Brain microvascular endothelial cell (primary cell): ENCODE measurements at regions of chr15 and their contacts with region 1.

Region 1: GRCh38 chr15:51380999-51381795 is 39.7 kb downstream of the GLDN start:
- DNase-seq: peak; percentile 65
- H3K4me3 ChIP-seq: no peak overlapping the region
- H3K27ac ChIP-seq: no peak overlapping the region
- H3K27me3 ChIP-seq: no peaks in the 10 kb centered on the region
- CTCF ChIP-seq: peak; percentile 94

Region 2: DNA sequence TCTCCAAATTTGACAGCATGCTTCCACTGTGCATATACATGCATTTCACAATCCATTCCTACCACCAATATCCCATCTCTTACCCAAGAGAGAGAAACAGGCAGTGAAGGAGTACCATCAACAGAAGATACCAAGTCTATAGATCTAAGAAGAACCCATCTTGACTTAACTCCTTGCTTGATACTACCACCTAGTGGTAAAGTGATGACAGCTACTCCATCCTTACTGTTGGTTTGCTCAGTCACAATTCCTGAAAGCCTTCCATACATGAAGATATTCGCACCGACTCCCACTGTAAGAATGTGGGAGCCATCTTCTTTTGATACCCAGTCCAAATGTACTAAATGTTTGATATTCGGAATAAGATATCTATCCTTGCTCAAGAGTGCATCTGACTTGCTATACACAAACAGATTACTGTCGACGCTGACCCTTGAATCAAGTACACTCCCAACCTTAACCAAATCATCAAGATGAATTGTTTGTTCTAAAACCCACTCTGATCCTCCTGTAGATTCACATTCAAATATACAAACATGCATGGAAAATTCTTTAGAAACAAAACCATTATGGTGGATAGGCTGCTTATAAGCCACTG is 118.3 kb after region 1 on chr15:
- in situ Hi-C with region 1: loop called (anchors 25 kb)
- DNase-seq: peak; percentile 35
- H3K4me3 ChIP-seq: no peak overlapping the region
- H3K27ac ChIP-seq: no peak overlapping the region
- H3K27me3 ChIP-seq: no peaks in the 10 kb centered on the region
- CTCF ChIP-seq: peak; percentile 71